ENCODE measurements at regions of chr9 and their contacts with region 1.

Region 1: DNA sequence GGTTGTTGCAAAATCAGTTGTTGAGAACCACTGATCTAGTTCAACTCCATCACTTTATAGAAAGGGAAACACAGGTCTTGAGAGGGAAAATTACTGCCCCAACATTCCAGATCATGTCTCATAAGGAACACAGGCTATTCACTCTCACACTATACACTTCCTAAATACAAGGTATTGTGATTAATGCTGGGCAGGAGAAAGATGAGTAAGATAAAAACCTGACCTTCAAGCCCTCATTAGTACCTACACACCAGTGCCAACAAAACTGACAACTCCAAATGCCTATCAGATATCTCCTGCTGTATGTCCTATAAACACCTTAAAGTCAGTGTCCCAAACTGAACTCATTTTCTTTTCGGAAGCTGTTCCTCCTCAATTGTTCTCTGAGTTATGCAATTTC is 8.2 kb downstream of the GNE start:
- DNase-seq: no peak
- H3K4me3 Mint-ChIP-seq: no peak overlapping the region
- H3K27ac Mint-ChIP-seq: no peak overlapping the region
- H3K4me1 Mint-ChIP-seq: peaks cover 18% of the 10 kb centered on the region
- H3K27me3 Mint-ChIP-seq: no peaks in the 10 kb centered on the region

Region 2: GRCh38 chr9:36018891-36019720 is 231.0 kb before region 1 on chr9:
- intact Hi-C with region 1: no loop called
- DNase-seq: no peak
- H3K4me3 Mint-ChIP-seq: no peak overlapping the region
- H3K27ac Mint-ChIP-seq: no peak overlapping the region
- H3K4me1 Mint-ChIP-seq: no peaks in the 10 kb centered on the region
- H3K27me3 Mint-ChIP-seq: peaks cover 21% of the 10 kb centered on the region

Region 3: DNA sequence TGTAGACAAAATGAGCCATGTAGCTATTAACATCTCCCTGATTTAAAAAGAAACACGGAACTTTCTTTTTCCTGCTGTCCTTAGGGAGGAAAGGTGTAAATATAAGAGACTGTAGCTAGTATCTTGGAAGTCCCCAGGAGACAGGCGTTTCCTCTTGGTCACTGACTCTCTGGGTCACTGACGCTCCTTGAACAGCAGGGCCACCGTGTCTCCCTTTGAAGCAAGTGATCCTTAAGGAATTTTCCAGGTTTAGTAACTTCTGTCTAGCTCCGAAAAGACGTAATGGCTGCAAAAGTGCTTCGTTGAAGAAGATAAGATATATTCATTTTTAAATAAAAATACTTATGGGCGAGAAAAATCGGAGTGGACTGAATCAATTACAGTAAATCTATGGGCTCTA is 60.1 kb before region 1 on chr9:
- intact Hi-C with region 1: no loop called
- DNase-seq: no peak
- H3K4me3 Mint-ChIP-seq: peak overlapping the region; percentile 98
- H3K27ac Mint-ChIP-seq: no peak overlapping the region
- H3K4me1 Mint-ChIP-seq: peaks cover 44% of the 10 kb centered on the region
- H3K27me3 Mint-ChIP-seq: peaks cover 8% of the 10 kb centered on the region

Region 4: GRCh38 chr9:36328798-36329411 is 78.8 kb after region 1 on chr9:
- intact Hi-C with region 1: loop called (anchors 1 kb)
- DNase-seq: peak; percentile 23
- H3K4me3 Mint-ChIP-seq: no peak overlapping the region
- H3K27ac Mint-ChIP-seq: no peak overlapping the region
- H3K4me1 Mint-ChIP-seq: peaks cover 4% of the 10 kb centered on the region
- H3K27me3 Mint-ChIP-seq: no peaks in the 10 kb centered on the region